ENCODE measurements at regions of chr1 and their contacts with region 1.

Region 1: GRCh38 chr1:6784560-6785317 is 515 bp upstream of the CAMTA1 start:
- DNase-seq: peak; percentile 100
- ATAC-seq: peak; percentile 85
- H3K4me3 ChIP-seq: peak overlapping the region; percentile 68
- H3K27ac ChIP-seq: peak overlapping the region; percentile 75
- H3K4me1 ChIP-seq: peaks cover 21% of the 10 kb centered on the region; the same call in 1 of the 2 replicates
- H3K27me3 ChIP-seq: no peaks in the 10 kb centered on the region
- CTCF ChIP-seq: no peak

Region 2: DNA sequence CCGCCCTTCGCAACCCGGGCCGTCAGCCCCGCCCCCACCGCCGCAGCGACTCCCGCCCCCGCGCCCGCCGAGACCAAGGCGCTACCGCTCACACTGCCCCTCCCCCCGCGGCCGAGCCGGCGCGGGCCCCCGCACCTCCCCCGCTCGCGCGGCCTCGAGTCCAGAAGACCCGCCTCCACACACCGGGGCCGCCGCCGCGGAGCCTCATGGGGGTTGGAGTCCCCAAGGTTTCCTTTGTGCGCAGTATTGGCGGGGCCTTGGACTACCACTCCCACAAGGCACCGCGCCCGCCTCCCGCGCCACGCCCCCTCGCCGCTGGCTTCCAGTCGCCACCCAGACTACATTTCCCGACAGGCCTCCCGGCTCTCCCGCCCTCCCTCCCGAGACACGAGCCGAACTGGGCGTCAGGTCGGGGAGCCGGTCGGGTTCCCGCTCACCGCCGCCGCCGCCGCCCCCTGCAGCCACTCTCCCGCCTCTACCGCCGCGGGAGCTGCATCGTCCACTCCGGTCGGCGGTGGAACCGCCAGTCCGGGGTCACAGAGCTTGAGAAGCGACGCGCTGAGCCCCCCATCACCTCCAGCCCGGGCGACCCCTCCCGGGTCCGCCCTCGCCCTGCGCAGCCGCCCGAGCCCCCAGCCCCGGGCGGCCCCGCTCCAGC is 171.2 kb before region 1 on chr1 and contains the start of gene PHF13:
- CTCF ChIA-PET with region 1: no interaction called
- POLR2A ChIA-PET with region 1: no interaction called
- intact Hi-C with region 1: loop called (anchors 2 kb)
- DNase-seq: peak; percentile 100
- ATAC-seq: peak; percentile 91
- H3K4me3 ChIP-seq: peak within 1 kb of the TSS; percentile 82
- H3K27ac ChIP-seq: peak within 1 kb of the TSS; percentile 81
- H3K4me1 ChIP-seq: peaks cover 16% of the 10 kb centered on the region
- H3K27me3 ChIP-seq: no peaks in the 10 kb centered on the region
- CTCF ChIP-seq: no peak
- total RNA-seq, gene PHF13: 13.2 and 14.9 TPM in 2 replicates

Region 3: GRCh38 chr1:6701437-6702153 is 83.1 kb before region 1 on chr1 and contains the start of gene DNAJC11:
- CTCF ChIA-PET with region 1: interaction called, 6 read pairs
- POLR2A ChIA-PET with region 1: no interaction called
- intact Hi-C with region 1: loop called (anchors 2 kb)
- DNase-seq: peak; percentile 97
- ATAC-seq: peak; percentile 93
- H3K4me3 ChIP-seq: peak within 1 kb of the TSS; percentile 87
- H3K27ac ChIP-seq: peak within 1 kb of the TSS; percentile 49
- H3K4me1 ChIP-seq: peaks cover 13% of the 10 kb centered on the region
- H3K27me3 ChIP-seq: peaks cover 2% of the 10 kb centered on the region; the same call in 1 of the 2 replicates
- CTCF ChIP-seq: peak; percentile 84
- total RNA-seq, gene DNAJC11: 105 and 108 TPM in 2 replicates

Region 4: GRCh38 chr1:6770751-6771440 is 13.8 kb before region 1 on chr1:
- CTCF ChIA-PET with region 1: no interaction called
- POLR2A ChIA-PET with region 1: interaction called, 14 read pairs
- intact Hi-C with region 1: no loop called
- DNase-seq: peak; percentile 62
- ATAC-seq: peak; percentile 93
- H3K4me3 ChIP-seq: 0 out of 2 replicates have a peak overlapping the region, but pooled peaks have one; percentile 20
- H3K27ac ChIP-seq: no peak overlapping the region
- H3K4me1 ChIP-seq: peaks cover 8% of the 10 kb centered on the region; the same call in 1 of the 2 replicates
- H3K27me3 ChIP-seq: no peaks in the 10 kb centered on the region
- CTCF ChIP-seq: no peak

Region 5: DNA sequence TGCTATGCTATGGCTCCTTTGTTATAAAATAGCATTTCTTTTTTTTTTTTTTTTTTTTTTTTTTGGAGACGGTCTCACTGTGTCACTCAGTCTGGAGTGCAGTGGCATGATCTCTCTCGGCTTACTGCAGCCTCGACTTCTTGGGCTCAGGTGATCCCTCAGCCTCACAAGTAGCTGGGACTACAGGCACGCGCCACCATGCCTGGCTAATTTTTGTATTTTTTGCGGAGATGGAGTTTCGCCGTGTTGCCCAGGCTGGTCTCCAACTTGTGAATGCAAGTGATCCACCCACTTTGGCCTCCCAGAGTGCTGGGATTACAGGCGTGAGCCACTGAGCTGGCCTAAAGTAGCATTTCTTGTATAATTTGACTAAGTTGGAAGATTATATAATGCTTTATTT is 11.4 kb after region 1 on chr1:
- CTCF ChIA-PET with region 1: no interaction called
- POLR2A ChIA-PET with region 1: no interaction called
- intact Hi-C with region 1: no loop called
- DNase-seq: no peak
- ATAC-seq: no peak
- H3K4me3 ChIP-seq: no peak overlapping the region
- H3K27ac ChIP-seq: no peak overlapping the region
- H3K4me1 ChIP-seq: no peaks in the 10 kb centered on the region
- H3K27me3 ChIP-seq: no peaks in the 10 kb centered on the region
- CTCF ChIP-seq: no peak

Measured in PC-3 (cell line).